Thyroid gland (tissue), 4 donors: ENCODE measurements at regions of chr13 and their contacts with region 1.

Region 1: DNA sequence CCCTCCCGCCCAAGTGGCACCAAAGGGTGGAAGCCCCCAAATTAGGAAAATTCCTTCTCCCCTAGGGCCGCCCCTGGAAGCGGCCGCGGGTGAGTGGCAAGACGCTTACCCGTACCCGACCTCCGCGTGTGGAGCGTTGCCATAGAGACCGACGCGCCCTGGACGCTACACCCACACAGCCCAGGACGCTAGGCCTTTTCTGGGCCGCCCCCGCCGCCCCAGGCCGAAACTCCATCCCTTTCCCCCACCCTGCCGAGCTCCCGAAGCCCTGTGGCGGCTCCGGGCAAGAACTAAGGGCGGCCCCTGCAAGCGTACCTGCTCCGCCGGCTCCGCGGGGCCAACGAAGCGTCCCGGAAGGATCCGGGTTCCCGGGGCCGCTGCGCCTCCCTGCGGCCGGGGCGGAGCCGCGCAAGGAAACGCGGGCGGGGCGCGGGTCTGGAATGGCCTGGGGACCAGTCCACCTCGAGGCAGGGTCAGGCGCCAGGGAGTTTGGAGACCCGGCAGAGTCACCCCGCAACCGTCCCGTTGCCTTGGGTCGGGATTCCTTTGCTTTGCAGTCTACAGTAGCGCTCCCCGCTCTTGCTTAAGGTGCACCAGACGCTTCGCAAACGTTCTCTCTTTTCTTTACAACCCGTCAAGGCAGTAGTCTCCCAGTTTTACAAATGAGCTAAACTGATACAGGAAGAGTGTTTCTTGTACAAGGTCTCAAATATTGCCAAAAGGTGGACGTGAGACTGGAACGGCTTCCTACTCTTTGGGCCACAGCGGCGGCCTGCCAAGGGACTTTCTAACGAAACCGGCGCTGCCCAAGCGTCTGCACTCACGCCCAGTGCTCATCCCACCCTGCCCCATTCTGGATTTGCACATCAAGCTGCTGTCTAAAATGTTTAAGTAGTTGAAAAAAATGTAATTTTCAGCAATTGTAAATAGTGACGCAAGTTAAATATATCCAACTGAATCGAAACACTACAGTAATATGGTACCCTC is at the start of gene NEK5:
- DNase-seq: peak; percentile 67 to 74
- H3K4me3 ChIP-seq: peak within 1 kb of the TSS; percentile 5 to 61 (median 60)
- H3K27ac ChIP-seq: peak within 1 kb of the TSS in 1 of 3 donors; percentile 24
- H3K4me1 ChIP-seq: peaks cover 0 to 9% of the 10 kb centered on the region in 2 donors
- H3K27me3 ChIP-seq: no peaks in the 10 kb centered on the region
- CTCF ChIP-seq: peak in 5 of 6 experiments; percentile 48 to 86 (median 74)
- POLR2A ChIP-seq: no peak
- total RNA-seq, gene NEK5: 0.13 to 0.73 (median 0.48) TPM

Region 2: DNA sequence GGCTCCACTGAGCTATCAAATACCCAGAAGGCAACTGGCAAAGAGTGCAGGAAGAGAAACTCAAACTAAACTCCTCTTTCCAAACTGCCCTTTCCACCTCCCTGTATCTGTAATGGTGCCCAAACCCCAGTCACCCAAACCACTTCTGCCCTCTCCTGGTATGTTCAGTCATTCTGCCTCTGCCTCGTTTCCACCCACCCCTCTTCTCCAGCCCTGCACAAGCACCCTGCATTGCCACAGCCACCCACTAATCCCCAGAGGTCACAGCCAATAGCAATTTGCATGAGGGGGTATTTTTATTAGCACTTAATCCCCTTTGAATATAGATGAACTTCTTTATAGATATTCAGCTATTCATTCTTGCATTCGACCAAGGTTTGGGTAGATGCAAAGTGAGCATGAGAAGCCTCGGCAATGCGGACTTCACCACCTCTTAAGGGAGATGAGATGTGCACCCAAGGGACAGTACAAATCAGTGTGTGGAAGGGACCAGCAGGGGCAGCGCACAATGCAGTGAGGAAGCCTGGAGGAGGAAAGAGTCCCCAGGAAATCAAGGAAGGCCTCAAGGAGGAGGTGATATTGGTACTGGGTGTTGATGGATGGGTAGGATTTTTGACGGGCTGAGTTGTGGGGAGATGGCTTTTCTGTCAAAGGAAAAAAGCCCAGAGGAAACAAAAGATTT is 296.4 kb before region 1 on chr13:
- intact Hi-C with region 1: loop called (anchors 10 kb)
- DNase-seq: peak; percentile 17 to 19
- H3K4me3 ChIP-seq: no peak overlapping the region
- H3K27ac ChIP-seq: no peak overlapping the region
- H3K4me1 ChIP-seq: no peaks in the 10 kb centered on the region
- H3K27me3 ChIP-seq: no peaks in the 10 kb centered on the region
- CTCF ChIP-seq: peak in 2 of 6 experiments; percentile 30 to 32
- POLR2A ChIP-seq: no peak

Region 3: DNA sequence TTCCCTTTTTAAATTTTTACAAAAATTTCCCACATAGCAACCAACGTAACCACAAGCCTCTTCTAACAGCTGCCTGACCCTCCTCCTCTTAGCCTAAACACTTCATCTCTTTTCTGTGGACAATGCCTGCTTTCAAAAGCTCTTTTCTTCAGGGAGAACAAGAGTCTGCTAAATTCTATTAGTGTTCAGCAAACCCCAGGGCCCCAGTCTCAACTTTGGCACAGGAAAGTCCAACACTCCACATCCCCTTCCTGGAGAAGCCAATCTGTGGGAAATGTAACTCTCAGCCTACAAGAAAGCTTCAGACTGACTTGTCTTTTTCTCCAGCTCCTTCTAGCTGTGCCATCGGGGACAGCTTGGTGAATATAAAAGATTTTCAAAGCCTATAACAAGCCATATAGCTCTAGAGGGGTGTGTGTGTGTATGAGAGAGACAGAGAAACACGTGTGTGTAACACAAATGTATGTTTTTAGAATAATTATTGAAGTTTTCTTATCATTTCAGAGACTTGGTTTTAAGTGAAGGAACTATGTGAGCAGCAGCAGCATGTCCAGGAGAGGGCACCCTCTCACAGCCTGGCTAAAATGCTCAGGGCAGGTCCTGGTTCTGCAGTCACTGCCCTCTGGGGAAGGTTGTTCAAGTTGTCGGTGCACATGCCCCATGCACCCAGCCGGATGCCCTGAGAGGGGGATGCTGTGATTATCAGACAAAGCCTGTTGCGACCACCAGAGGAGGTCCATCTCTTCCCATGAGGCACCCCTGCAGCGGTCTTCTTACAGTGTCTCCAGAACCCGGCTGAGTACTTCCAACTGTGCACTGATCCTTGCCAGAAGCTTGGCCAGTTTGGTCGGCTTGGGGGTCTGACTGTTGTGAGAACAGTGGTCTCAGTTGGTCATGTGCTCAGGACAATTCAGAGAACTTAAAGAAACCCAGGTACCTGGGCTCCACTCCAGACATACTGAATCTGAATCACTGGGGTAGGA is 232.8 kb before region 1 on chr13:
- intact Hi-C with region 1: loop called (anchors 5 kb)
- DNase-seq: peak; percentile 63 to 70
- H3K4me3 ChIP-seq: no peak overlapping the region
- H3K27ac ChIP-seq: no peak overlapping the region
- H3K4me1 ChIP-seq: no peaks in the 10 kb centered on the region
- H3K27me3 ChIP-seq: no peaks in the 10 kb centered on the region
- CTCF ChIP-seq: peak; percentile 22 to 68 (median 46)
- POLR2A ChIP-seq: no peak

Region 4: DNA sequence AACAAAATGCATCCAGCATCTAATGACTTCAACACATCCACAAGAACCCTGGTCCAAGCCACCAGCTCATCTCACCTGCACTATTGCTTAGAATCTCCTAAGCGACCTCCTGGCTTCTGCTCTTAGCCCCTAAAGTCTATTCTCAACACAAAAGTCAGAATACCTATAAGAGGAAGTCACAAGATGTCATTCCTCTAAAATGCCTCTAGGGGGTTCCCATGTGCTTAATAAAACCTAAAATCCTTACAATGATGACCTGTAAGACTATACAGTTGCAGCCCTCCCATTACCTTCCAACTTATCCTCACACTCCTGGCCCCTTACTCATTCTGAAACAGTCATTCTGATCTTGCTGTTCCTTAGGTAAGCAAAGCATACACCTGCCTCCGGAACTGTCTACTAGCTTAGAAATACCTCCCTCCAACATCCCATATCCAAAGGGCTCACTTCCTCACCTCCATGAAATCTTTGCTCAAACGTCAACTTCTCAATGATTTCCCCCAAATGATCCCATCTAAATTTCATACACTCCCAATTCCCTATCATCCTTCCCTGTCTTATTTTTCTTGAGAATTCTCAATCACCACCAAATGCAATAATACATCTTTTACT is 127.8 kb before region 1 on chr13:
- intact Hi-C with region 1: loop called (anchors 5 kb)
- DNase-seq: no peak
- H3K4me3 ChIP-seq: no peak overlapping the region
- H3K27ac ChIP-seq: no peak overlapping the region
- H3K4me1 ChIP-seq: peaks cover 9 to 15% of the 10 kb centered on the region in 2 donors
- H3K27me3 ChIP-seq: no peaks in the 10 kb centered on the region
- CTCF ChIP-seq: peak; percentile 26 to 74 (median 54)
- POLR2A ChIP-seq: no peak